Activated B cell treated with CpG ODN at 0.5 μM for 24 hours (primary cell): ENCODE measurements at regions of chr5 and their contacts with region 1.

Region 1: GRCh38 chr5:138178516-138179276 is at the starts of genes BRD8 and KIF20A:
- DNase-seq: peak; percentile 69
- ATAC-seq: peak; percentile 93
- H3K4me3 Mint-ChIP-seq: no peak within 1 kb of the TSS
- H3K27ac Mint-ChIP-seq: no peak within 1 kb of the TSS
- H3K4me1 Mint-ChIP-seq: peaks cover 4% of the 10 kb centered on the region
- H3K27me3 Mint-ChIP-seq: no peaks in the 10 kb centered on the region
- CTCF ChIP-seq: no peak
- total RNA-seq, gene BRD8: 63.5 and 77.8 TPM in 2 replicates
- total RNA-seq, gene KIF20A: 0.40 and 0.44 TPM in 2 replicates

Region 2: GRCh38 chr5:137754126-137754960 is 424.4 kb before region 1 on chr5 and contains the start of gene HNRNPA0:
- CTCF ChIA-PET with region 1: interaction called, 3 read pairs
- POLR2A ChIA-PET with region 1: interaction called, 11 read pairs
- intact Hi-C with region 1: loop called (anchors 1 kb)
- DNase-seq: peak; percentile 95
- ATAC-seq: peak; percentile 82
- H3K4me3 Mint-ChIP-seq: peak within 1 kb of the TSS; percentile 95
- H3K27ac Mint-ChIP-seq: peak within 1 kb of the TSS; percentile 100
- H3K4me1 Mint-ChIP-seq: peaks cover 35% of the 10 kb centered on the region
- H3K27me3 Mint-ChIP-seq: no peaks in the 10 kb centered on the region
- CTCF ChIP-seq: no peak
- total RNA-seq, gene HNRNPA0: 31.2 and 34.7 TPM in 2 replicates

Region 3: GRCh38 chr5:138035605-138036537 is 142.8 kb before region 1 on chr5:
- CTCF ChIA-PET with region 1: no interaction called
- POLR2A ChIA-PET with region 1: no interaction called
- intact Hi-C with region 1: loop called (anchors 1 kb)
- DNase-seq: no peak
- ATAC-seq: peak; percentile 44
- H3K4me3 Mint-ChIP-seq: peak overlapping the region; percentile 48
- H3K27ac Mint-ChIP-seq: peak overlapping the region; percentile 21
- H3K4me1 Mint-ChIP-seq: peaks cover 34% of the 10 kb centered on the region
- H3K27me3 Mint-ChIP-seq: no peaks in the 10 kb centered on the region
- CTCF ChIP-seq: peak; percentile 72

Region 4: GRCh38 chr5:138213161-138214029 is 34.7 kb after region 1 on chr5 and contains the start of gene CDC23:
- CTCF ChIA-PET with region 1: no interaction called
- POLR2A ChIA-PET with region 1: interaction called, 10 read pairs
- intact Hi-C with region 1: loop called (anchors 1 kb)
- DNase-seq: peak; percentile 67
- ATAC-seq: peak; percentile 96
- H3K4me3 Mint-ChIP-seq: peak within 1 kb of the TSS; percentile 99
- H3K27ac Mint-ChIP-seq: peak within 1 kb of the TSS; percentile 93
- H3K4me1 Mint-ChIP-seq: peaks cover 27% of the 10 kb centered on the region
- H3K27me3 Mint-ChIP-seq: no peaks in the 10 kb centered on the region
- CTCF ChIP-seq: no peak
- total RNA-seq, gene CDC23: 31.9 and 35.0 TPM in 2 replicates

Region 5: GRCh38 chr5:138337685-138338410 is 159.2 kb after region 1 on chr5 and contains the start of gene FAM53C:
- CTCF ChIA-PET with region 1: no interaction called
- POLR2A ChIA-PET with region 1: interaction called, 14 read pairs
- intact Hi-C with region 1: loop called (anchors 1 kb)
- DNase-seq: peak; percentile 97
- ATAC-seq: peak; percentile 81
- H3K4me3 Mint-ChIP-seq: peak within 1 kb of the TSS; percentile 90
- H3K27ac Mint-ChIP-seq: peak within 1 kb of the TSS; percentile 100
- H3K4me1 Mint-ChIP-seq: peaks cover 37% of the 10 kb centered on the region
- H3K27me3 Mint-ChIP-seq: no peaks in the 10 kb centered on the region
- CTCF ChIP-seq: no peak
- total RNA-seq, gene FAM53C: 23.5 and 24.9 TPM in 2 replicates

Region 6: GRCh38 chr5:138408023-138408422 is 229.3 kb after region 1 on chr5:
- CTCF ChIA-PET with region 1: interaction called, 3 read pairs
- POLR2A ChIA-PET with region 1: interaction called, 4 read pairs
- intact Hi-C with region 1: loop called (anchors 1 kb)
- DNase-seq: no peak
- ATAC-seq: peak; percentile 89
- H3K4me3 Mint-ChIP-seq: no peak overlapping the region
- H3K27ac Mint-ChIP-seq: peak overlapping the region; percentile 71
- H3K4me1 Mint-ChIP-seq: peaks cover 14% of the 10 kb centered on the region
- H3K27me3 Mint-ChIP-seq: no peaks in the 10 kb centered on the region
- CTCF ChIP-seq: no peak

Region 7: DNA sequence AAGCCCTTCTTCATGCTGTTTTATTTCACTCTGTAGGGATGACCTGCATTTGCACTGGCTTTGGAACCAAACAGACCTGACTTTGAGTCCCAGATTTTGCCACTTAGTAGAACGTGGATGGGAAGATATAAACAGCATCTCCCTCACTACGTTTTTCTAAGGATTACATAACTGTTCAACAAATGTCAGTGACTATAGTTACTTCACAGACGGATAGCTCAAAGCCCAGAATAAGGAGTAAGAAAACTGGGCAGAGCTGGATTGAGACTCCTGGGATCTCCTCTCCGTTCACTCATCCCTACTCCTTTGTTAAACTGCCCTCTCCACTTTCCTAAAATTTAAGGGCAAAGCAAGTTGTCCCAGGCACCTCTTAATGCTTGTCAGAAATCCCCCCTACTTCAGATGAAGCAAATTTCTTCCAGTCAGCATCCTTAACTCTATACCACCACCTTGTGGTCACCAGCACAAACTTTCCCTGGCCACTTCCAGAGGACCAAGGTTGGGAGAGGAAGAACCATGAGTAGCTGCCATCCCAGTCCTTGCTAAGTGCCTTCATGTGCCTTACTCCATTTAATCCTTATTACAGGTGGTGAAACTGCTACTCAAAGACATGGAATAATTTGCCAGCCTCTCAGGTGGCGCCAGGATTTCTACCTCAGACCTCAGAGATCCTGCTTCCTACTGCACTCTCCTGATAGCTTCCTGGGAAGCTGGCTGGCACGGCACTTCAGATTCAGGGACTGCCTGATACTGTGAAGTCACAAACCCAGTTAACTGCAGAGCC is 325.0 kb after region 1 on chr5:
- CTCF ChIA-PET with region 1: interaction called, 3 read pairs
- POLR2A ChIA-PET with region 1: interaction called, 4 read pairs
- intact Hi-C with region 1: loop called (anchors 1 kb)
- DNase-seq: no peak
- ATAC-seq: peak; percentile 81
- H3K4me3 Mint-ChIP-seq: no peak overlapping the region
- H3K27ac Mint-ChIP-seq: no peak overlapping the region
- H3K4me1 Mint-ChIP-seq: no peaks in the 10 kb centered on the region
- H3K27me3 Mint-ChIP-seq: no peaks in the 10 kb centered on the region
- CTCF ChIP-seq: no peak